ENCODE measurements at regions of chr19 and their contacts with region 1.

Region 1: GRCh38 chr19:3984908-3985642 is at the start of gene EEF2:
- DNase-seq: peak; percentile 97
- ATAC-seq: peak; percentile 56
- H3K4me3 ChIP-seq: peak within 1 kb of the TSS; percentile 66 to 93 (median 75)
- H3K4me3 Mint-ChIP-seq: peak within 1 kb of the TSS; percentile 98
- H3K27ac ChIP-seq: peak within 1 kb of the TSS; percentile 78 to 90
- H3K27ac Mint-ChIP-seq: peak within 1 kb of the TSS; percentile 97
- H3K4me1 ChIP-seq: peaks cover 40 to 57% of the 10 kb centered on the region in 2 donors
- H3K4me1 Mint-ChIP-seq: peaks cover 62% of the 10 kb centered on the region
- H3K27me3 ChIP-seq: no peaks in the 10 kb centered on the region
- H3K27me3 Mint-ChIP-seq: no peaks in the 10 kb centered on the region
- CTCF ChIP-seq: no peak
- total RNA-seq, gene EEF2: 2,947 and 3,167 TPM in 2 replicates

Region 2: DNA sequence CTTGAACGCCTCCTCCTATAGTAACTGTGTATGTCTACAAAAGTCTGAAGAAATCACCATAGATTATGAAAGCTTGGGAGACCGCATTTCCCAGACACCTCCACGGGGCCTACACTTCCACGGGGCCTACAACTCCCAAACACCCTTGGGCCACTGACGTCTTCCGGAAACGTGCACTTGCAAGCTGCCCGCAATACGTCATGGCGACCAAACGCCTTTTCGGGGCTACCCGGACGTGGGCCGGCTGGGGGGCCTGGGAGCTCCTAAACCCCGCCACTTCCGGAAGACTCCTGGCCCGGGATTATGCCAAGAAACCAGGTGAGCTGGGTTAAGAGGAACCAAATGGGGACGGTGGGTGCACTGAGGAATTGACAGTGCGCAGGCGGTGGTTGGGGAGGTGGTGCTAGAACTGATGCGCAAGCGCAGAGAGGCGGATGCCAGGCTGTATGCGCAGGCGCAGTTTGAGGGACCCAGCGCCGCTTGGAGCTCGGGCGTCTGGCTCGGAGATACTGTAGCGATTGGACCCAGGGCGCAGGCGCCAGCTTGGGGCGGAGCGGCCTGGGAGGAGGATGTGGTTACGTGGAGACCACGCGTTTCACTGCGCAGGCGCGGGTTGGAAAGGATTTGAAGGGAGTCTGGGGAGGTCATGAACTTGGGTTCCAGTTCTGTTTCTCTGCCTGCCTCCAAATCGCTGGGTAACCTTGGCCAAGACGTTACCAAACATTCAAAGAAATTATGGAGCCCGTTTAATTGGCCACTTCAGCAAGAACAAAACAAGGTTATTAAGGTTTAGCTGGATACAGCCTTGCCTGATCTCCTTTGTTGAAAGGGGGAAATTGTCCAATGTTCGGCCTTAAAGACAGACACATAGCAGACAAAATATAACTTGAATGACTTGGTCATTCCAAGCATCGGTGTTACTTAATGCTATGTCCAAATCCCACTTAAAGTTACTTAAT is 222.3 kb before region 1 on chr19 and contains the start of gene MRPL54:
- CTCF ChIA-PET with region 1: interaction called, 6 read pairs
- POLR2A ChIA-PET with region 1: interaction called, 12 read pairs
- intact Hi-C with region 1: loop called (anchors 5 kb)
- DNase-seq: peak; percentile 100
- ATAC-seq: peak; percentile 78
- H3K4me3 ChIP-seq: peak within 1 kb of the TSS; percentile 49 to 99 (median 97)
- H3K4me3 Mint-ChIP-seq: peak within 1 kb of the TSS; percentile 99
- H3K27ac ChIP-seq: peak within 1 kb of the TSS; percentile 100
- H3K27ac Mint-ChIP-seq: peak within 1 kb of the TSS; percentile 100
- H3K4me1 ChIP-seq: peaks cover 25 to 35% of the 10 kb centered on the region in 2 donors
- H3K4me1 Mint-ChIP-seq: peaks cover 37% of the 10 kb centered on the region
- H3K27me3 ChIP-seq: no peaks in the 10 kb centered on the region
- H3K27me3 Mint-ChIP-seq: no peaks in the 10 kb centered on the region
- CTCF ChIP-seq: no peak
- total RNA-seq, gene MRPL54: 48.6 and 54.3 TPM in 2 replicates

Region 3: DNA sequence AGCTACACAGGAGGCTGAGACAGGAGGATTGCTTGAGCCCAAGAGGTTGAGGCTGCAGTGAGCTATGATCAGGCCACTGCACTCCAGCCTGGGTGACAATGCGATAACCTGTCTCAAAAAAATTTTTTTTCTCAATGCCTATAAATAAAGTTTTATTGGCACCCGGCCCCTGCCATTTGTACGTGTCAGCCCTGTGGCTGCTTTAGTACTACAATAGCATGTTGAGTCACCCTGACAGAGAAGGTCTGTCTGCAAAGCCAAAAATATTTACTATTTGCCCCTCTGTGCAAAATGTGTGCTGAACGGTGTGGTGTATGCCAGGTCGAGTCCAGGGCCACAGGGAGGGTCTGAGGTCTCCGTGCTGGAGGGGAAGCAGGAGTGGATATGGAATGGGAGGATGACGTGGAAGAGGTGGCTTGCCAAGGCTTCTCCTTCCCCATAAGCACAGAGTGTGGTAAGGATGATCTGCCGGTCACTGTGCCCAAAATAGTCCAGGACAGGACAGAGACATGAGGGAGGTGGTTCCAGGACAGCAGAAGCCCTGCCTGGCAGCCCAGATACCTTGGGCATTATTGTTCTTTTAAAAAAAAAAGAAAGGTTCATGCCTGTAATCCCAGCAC is 42.2 kb before region 1 on chr19:
- CTCF ChIA-PET with region 1: no interaction called
- POLR2A ChIA-PET with region 1: no interaction called
- intact Hi-C with region 1: no loop called
- DNase-seq: no peak
- ATAC-seq: no peak
- H3K4me3 ChIP-seq: no peak overlapping the region
- H3K4me3 Mint-ChIP-seq: no peak overlapping the region
- H3K27ac ChIP-seq: no peak overlapping the region
- H3K27ac Mint-ChIP-seq: no peak overlapping the region
- H3K4me1 ChIP-seq: peaks cover 0 to 3% of the 10 kb centered on the region in 2 donors
- H3K4me1 Mint-ChIP-seq: no peaks in the 10 kb centered on the region
- H3K27me3 ChIP-seq: peaks cover 0 to 2% (median 0%) of the 10 kb centered on the region in 4 experiments
- H3K27me3 Mint-ChIP-seq: no peaks in the 10 kb centered on the region
- CTCF ChIP-seq: no peak

Region 4: GRCh38 chr19:4065430-4066175 is 80.5 kb after region 1 on chr19:
- CTCF ChIA-PET with region 1: interaction called, 3 read pairs
- POLR2A ChIA-PET with region 1: interaction called, 15 read pairs
- intact Hi-C with region 1: loop called (anchors 1 kb)
- DNase-seq: peak; percentile 98
- ATAC-seq: peak; percentile 74
- H3K4me3 ChIP-seq: peak overlapping the region in 4 of 5 experiments; percentile 82 to 90 (median 89)
- H3K4me3 Mint-ChIP-seq: peak overlapping the region; percentile 68
- H3K27ac ChIP-seq: no peak overlapping the region
- H3K27ac Mint-ChIP-seq: peak overlapping the region; percentile 77
- H3K4me1 ChIP-seq: peaks cover 54 to 63% of the 10 kb centered on the region in 2 donors
- H3K4me1 Mint-ChIP-seq: peaks cover 42% of the 10 kb centered on the region
- H3K27me3 ChIP-seq: no peaks in the 10 kb centered on the region
- H3K27me3 Mint-ChIP-seq: no peaks in the 10 kb centered on the region
- CTCF ChIP-seq: no peak

Region 5: GRCh38 chr19:4123615-4124568 is 138.8 kb after region 1 on chr19 and contains the start of gene MAP2K2:
- CTCF ChIA-PET with region 1: no interaction called
- POLR2A ChIA-PET with region 1: interaction called, 6 read pairs
- intact Hi-C with region 1: loop called (anchors 5 kb)
- DNase-seq: peak; percentile 97
- ATAC-seq: peak; percentile 96
- H3K4me3 ChIP-seq: peak within 1 kb of the TSS; percentile 51 to 81 (median 62)
- H3K4me3 Mint-ChIP-seq: peak within 1 kb of the TSS; percentile 87
- H3K27ac ChIP-seq: peak within 1 kb of the TSS; percentile 56 to 85
- H3K27ac Mint-ChIP-seq: peak within 1 kb of the TSS; percentile 90
- H3K4me1 ChIP-seq: peaks cover 16 to 18% of the 10 kb centered on the region in 2 donors
- H3K4me1 Mint-ChIP-seq: peaks cover 20% of the 10 kb centered on the region
- H3K27me3 ChIP-seq: no peaks in the 10 kb centered on the region
- H3K27me3 Mint-ChIP-seq: no peaks in the 10 kb centered on the region
- CTCF ChIP-seq: no peak
- total RNA-seq, gene MAP2K2: 137 and 138 TPM in 2 replicates

Region 6: GRCh38 chr19:4199699-4200293 is 214.7 kb after region 1 on chr19:
- CTCF ChIA-PET with region 1: interaction called, 21 read pairs
- POLR2A ChIA-PET with region 1: interaction called, 6 read pairs
- intact Hi-C with region 1: loop called (anchors 1 kb)
- DNase-seq: no peak
- ATAC-seq: no peak
- H3K4me3 ChIP-seq: no peak overlapping the region
- H3K4me3 Mint-ChIP-seq: no peak overlapping the region
- H3K27ac ChIP-seq: no peak overlapping the region
- H3K27ac Mint-ChIP-seq: no peak overlapping the region
- H3K4me1 ChIP-seq: peaks cover 10 to 15% of the 10 kb centered on the region in 2 donors
- H3K4me1 Mint-ChIP-seq: peaks cover 15% of the 10 kb centered on the region
- H3K27me3 ChIP-seq: peaks cover 2 to 42% (median 20%) of the 10 kb centered on the region in 4 experiments
- H3K27me3 Mint-ChIP-seq: peaks cover 30% of the 10 kb centered on the region
- CTCF ChIP-seq: no peak

Region 7: DNA sequence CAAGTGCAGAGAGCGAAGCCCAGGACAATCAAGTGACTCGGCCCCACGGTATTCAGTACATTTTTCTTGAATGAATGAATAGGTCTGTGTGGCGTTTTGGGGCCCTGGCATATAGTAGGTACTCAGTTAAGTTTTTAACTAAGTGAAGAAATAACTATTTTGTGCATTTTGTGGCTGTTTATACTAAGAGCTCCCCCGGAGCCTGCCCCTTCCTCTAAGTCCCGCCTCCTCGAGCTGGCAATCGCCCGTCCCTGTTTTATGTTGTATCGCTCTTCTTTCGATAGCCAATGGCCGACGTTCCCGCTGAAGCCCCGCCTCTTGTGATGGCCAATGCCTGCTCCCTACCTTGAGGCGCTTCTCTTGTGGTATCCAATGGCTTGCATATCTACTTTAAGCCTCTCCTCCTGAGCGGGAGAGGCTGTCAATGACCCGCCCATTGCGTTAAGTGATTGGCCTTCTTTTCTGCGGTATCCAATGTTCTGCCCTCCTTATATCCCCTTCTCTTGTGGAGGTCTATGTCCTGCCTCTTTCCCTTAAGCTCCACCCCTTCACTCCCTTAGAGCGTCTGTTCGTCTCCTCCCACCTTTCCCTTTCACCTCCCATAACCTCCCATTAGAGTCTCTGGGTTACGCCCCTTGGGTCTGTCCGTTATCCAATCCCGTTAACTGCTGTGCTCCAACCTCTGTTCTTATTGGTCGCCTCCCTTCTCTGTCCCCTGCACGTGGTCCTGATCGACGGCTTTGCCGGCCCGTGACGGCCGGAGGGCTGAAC is 486.5 kb after region 1 on chr19:
- CTCF ChIA-PET with region 1: no interaction called
- POLR2A ChIA-PET with region 1: no interaction called
- intact Hi-C with region 1: loop called (anchors 5 kb)
- DNase-seq: peak; percentile 100
- ATAC-seq: peak; percentile 85
- H3K4me3 ChIP-seq: peak overlapping the region; percentile 76 to 98 (median 85)
- H3K4me3 Mint-ChIP-seq: no peak overlapping the region
- H3K27ac ChIP-seq: peak overlapping the region; percentile 68 to 74
- H3K27ac Mint-ChIP-seq: no peak overlapping the region
- H3K4me1 ChIP-seq: peaks cover 20 to 31% of the 10 kb centered on the region in 2 donors
- H3K4me1 Mint-ChIP-seq: peaks cover 22% of the 10 kb centered on the region
- H3K27me3 ChIP-seq: no peaks in the 10 kb centered on the region
- H3K27me3 Mint-ChIP-seq: no peaks in the 10 kb centered on the region
- CTCF ChIP-seq: no peak